Tibial artery (tissue), 4 donors: ENCODE measurements at regions of chr3 and their contacts with region 1.

Region 1: GRCh38 chr3:149129326-149130205 is at the start of gene HPS3:
- DNase-seq: peak; percentile 91 to 95
- H3K4me3 ChIP-seq: peak within 1 kb of the TSS; percentile 81 to 95
- H3K27ac ChIP-seq: peak within 1 kb of the TSS; percentile 82 to 87
- H3K4me1 ChIP-seq: peaks cover 0 to 36% (median 19%) of the 10 kb centered on the region in 4 donors
- H3K27me3 ChIP-seq: no peaks in the 10 kb centered on the region
- CTCF ChIP-seq: peak in 1 of 2 experiments; percentile 16

Region 2: GRCh38 chr3:149067883-149068282 is 61.7 kb before region 1 on chr3:
- intact Hi-C with region 1: no loop called
- DNase-seq: no peak
- H3K4me3 ChIP-seq: no peak overlapping the region
- H3K27ac ChIP-seq: no peak overlapping the region
- H3K4me1 ChIP-seq: no peaks in the 10 kb centered on the region
- H3K27me3 ChIP-seq: no peaks in the 10 kb centered on the region
- CTCF ChIP-seq: no peak

Region 3: DNA sequence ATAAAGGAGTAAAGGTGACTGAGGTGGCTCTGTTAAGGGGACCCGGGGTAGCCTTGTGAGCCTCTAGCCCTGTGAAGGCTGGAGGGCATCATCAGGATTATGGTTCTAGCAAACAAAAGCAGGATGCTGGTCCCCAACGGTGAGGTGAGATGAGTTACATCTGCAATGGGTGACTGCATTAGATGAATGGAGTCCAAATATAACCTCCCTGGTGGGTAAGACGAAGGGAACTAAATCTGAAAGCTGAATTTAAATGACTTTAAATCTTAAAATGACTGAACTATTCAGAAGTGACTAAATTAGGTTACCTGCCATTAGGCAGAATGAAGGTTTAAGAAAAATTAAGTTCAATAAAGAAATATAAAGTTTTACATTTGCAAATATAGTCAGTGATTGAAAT is 38.7 kb before region 1 on chr3:
- intact Hi-C with region 1: loop called (anchors 5 kb)
- DNase-seq: no peak
- H3K4me3 ChIP-seq: no peak overlapping the region
- H3K27ac ChIP-seq: no peak overlapping the region
- H3K4me1 ChIP-seq: peaks cover 0 to 3% (median 0%) of the 10 kb centered on the region in 4 donors
- H3K27me3 ChIP-seq: no peaks in the 10 kb centered on the region
- CTCF ChIP-seq: no peak

Region 4: GRCh38 chr3:149494022-149494758 is 364.6 kb after region 1 on chr3:
- intact Hi-C with region 1: loop called (anchors 10 kb)
- DNase-seq: peak; percentile 60 to 74
- H3K4me3 ChIP-seq: no peak overlapping the region
- H3K27ac ChIP-seq: no peak overlapping the region
- H3K4me1 ChIP-seq: peaks cover 0 to 13% (median 5%) of the 10 kb centered on the region in 4 donors
- H3K27me3 ChIP-seq: no peaks in the 10 kb centered on the region
- CTCF ChIP-seq: peak; percentile 82 to 84